IMR-90 (cell line): ENCODE measurements at regions of chr2 and their contacts with region 1.

Region 1: DNA sequence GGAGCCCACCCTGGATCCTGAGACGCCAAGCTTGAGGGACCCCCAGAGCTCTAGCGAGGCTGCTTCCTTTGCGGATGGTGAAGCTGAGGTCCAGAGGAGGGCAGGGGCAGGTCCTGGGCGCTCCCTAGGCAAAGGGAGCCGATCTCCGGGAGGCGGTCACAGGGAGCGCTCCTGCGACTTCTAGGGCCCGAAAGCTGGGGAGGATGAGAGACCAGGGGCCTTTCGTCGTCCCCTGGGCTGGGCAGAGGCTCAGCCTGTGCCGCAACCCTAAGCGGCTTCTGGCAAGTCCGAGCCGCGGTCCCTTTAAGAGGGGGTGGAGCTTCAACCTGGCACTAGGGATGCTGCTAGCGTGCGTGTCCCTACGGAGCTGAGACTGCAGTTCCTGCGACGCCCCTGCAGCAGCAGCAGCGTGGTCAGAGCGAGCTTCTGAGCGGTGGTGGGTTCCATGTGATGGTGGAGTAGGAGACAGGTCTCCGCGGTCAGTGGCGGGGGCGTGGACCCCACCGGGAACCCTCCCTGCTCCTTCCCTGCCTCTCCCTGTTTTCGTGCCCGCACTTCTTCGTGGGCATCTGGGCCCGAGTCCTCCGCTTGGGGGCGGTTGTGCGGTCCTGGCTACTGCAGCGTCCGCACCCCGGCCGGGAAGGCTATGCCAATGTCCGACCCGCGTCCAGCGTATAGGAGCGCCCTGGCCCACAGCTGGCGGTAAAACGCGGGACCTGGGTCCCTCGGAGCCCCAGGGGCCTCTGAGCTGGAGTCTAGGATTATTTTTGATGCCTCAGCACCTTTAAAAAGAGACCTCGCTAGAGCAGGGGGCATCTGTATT is 154.6 kb downstream of the CCDC74A start:
- DNase-seq: peak; percentile 84
- ATAC-seq: peak; percentile 88
- H3K4me3 ChIP-seq: peak overlapping the region; percentile 75
- H3K27ac ChIP-seq: peak overlapping the region; percentile 58
- H3K4me1 ChIP-seq: peaks cover 5% of the 10 kb centered on the region; the same call in 1 of the 2 replicates
- H3K27me3 ChIP-seq: no peaks in the 10 kb centered on the region
- CTCF ChIP-seq: peak; percentile 23
- POLR2A ChIP-seq: peak; percentile 82
- RAD21 ChIP-seq: peak; percentile 10; the same call in 1 of the 2 replicates

Region 2: GRCh38 chr2:131492418-131493198 is 189.7 kb before region 1 on chr2:
- CTCF ChIA-PET with region 1: interaction called, 3 read pairs
- POLR2A ChIA-PET with region 1: no interaction called
- dilution Hi-C with region 1: no loop called
- in situ Hi-C with region 1: no loop called
- intact Hi-C with region 1: loop called (anchors 5 kb)
- DNase-seq: peak; percentile 90
- ATAC-seq: peak; percentile 82
- H3K4me3 ChIP-seq: peak overlapping the region; percentile 76
- H3K27ac ChIP-seq: peak overlapping the region; percentile 74
- H3K4me1 ChIP-seq: 0 out of 2 replicates have a peak, but pooled peaks cover 2% of the 10 kb centered on the region
- H3K27me3 ChIP-seq: no peaks in the 10 kb centered on the region
- CTCF ChIP-seq: peak; percentile 66
- POLR2A ChIP-seq: no peak
- RAD21 ChIP-seq: no peak

Region 3: DNA sequence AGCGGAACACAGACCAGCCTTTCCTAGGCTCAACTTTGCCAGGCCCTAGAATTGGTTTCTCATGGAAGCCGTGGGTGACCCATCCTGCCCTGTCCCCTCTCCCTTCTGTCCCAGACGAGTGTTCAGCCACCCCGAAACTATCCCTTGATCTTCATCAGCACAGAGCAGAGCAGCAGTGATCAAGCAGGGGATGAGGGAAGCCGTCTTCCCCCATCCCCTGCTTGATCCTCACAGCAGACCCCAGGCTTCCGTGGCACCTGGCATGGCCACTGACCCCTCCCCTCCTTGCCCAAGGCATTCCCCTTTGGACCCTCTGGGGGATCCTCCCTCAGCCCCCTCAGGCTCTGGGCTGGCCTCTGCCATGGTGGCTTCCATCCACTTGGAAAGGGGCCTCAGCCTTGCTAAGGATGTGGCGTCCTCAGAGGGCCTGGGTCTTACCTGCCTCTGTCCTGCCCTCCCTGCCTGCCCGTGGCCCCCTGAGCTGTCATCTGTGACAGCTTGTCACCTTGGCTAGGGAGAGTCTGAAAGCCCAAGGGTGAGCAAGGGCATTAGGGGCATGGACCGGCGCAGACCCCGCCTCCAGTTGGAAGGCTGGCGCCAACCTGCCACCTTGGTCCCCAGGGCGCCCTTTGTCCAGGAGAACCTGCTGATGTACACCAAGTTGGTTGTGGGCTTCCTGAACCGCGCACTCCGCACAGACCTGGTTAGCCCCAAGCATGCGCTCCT is 165.1 kb before region 1 on chr2:
- CTCF ChIA-PET with region 1: no interaction called
- POLR2A ChIA-PET with region 1: no interaction called
- dilution Hi-C with region 1: no loop called
- in situ Hi-C with region 1: no loop called
- intact Hi-C with region 1: no loop called
- DNase-seq: no peak
- ATAC-seq: no peak
- H3K4me3 ChIP-seq: no peak overlapping the region
- H3K27ac ChIP-seq: no peak overlapping the region
- H3K4me1 ChIP-seq: no peaks in the 10 kb centered on the region
- H3K27me3 ChIP-seq: no peaks in the 10 kb centered on the region
- CTCF ChIP-seq: no peak
- POLR2A ChIP-seq: no peak
- RAD21 ChIP-seq: no peak